Naive thymus-derived CD8-positive, alpha-beta T cell (primary cell): ENCODE measurements at regions of chr17 and their contacts with region 1.

Region 1: DNA sequence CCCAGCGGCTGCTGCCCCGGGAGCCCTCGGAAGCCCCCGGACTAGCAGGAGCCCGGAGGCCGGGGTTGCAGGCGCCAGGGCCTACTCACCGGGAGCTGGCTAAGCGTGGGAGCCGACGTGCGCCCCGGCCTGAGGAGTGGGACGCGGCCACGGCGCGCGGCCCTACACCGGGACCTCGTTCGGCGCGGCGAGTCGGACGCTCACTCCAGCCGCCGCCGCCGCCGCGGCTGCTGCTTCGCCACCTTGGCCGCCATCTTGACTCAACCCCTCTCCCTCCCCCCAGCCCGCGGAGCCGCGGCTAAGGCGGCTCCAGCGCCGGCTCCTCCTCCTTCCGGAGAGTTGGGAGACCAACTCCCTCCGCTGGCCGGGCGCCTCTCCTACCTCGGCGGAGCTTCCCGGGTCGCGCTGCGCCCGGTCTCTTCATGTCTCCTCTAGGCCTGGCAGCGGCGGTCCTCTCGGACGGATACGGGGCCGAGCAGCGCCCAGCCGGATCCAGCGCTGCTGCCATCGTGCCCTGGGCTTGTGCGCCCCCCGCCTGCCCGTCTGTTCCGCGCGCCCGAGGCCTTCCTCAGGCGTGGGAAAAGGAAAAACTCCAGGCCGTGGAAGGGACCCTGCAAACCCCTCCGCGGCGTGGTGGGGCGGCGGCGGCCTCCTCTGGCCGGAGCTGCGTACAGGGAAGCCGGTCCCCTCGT is at the start of gene NCOR1:
- DNase-seq: peak; percentile 78 to 91 (median 82)
- ATAC-seq: peak; percentile 86
- H3K4me3 Mint-ChIP-seq: peak within 1 kb of the TSS; percentile 89 to 99 (median 96)
- H3K27ac Mint-ChIP-seq: peak within 1 kb of the TSS; percentile 81 to 98 (median 94)
- H3K4me1 Mint-ChIP-seq: peaks cover 15 to 59% (median 53%) of the 10 kb centered on the region in 4 donors
- H3K27me3 Mint-ChIP-seq: no peaks in the 10 kb centered on the region
- polyA plus RNA-seq, gene NCOR1: 41.8 to 132 (median 73.7) TPM

Region 2: GRCh38 chr17:16150251-16150856 is 65.1 kb before region 1 on chr17:
- POLR2A ChIA-PET with region 1: no interaction called
- DNase-seq: no peak
- ATAC-seq: no peak
- H3K4me3 Mint-ChIP-seq: no peak overlapping the region
- H3K27ac Mint-ChIP-seq: no peak overlapping the region
- H3K4me1 Mint-ChIP-seq: peaks cover 0 to 3% (median 0%) of the 10 kb centered on the region in 4 donors
- H3K27me3 Mint-ChIP-seq: no peaks in the 10 kb centered on the region

Region 3: DNA sequence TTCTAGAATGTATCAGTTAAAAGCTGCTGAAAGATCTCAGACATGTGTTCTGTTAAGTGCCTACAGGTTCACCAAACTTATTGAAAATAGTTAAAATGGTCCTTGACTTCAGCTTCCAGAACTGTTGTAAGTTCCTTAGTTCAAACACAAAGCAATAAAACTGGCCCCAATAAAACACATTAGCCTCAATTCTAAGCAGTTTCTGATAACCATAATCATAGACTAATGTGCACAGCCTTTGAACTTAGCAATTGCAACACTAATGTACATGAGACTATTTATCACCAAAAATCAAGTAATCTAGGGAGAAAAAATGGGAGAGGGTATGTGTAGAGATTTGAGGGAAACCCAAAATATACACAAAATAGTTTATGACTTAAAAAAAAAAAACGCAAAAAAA is 17.0 kb after region 1 on chr17:
- POLR2A ChIA-PET with region 1: interaction called, 11 read pairs
- DNase-seq: no peak
- ATAC-seq: no peak
- H3K4me3 Mint-ChIP-seq: no peak overlapping the region
- H3K27ac Mint-ChIP-seq: peak overlapping the region in 3 of 10 donors; percentile 3 to 46 (median 45)
- H3K4me1 Mint-ChIP-seq: peaks cover 10 to 23% (median 16%) of the 10 kb centered on the region in 4 donors
- H3K27me3 Mint-ChIP-seq: no peaks in the 10 kb centered on the region

Region 4: GRCh38 chr17:16285957-16286640 is 70.7 kb after region 1 on chr17:
- POLR2A ChIA-PET with region 1: interaction called, 16 read pairs
- DNase-seq: peak; percentile 21 to 83 (median 66)
- ATAC-seq: peak; percentile 92 to 95
- H3K4me3 Mint-ChIP-seq: peak overlapping the region; percentile 67 to 85 (median 80)
- H3K27ac Mint-ChIP-seq: peak overlapping the region; percentile 95 to 99 (median 98)
- H3K4me1 Mint-ChIP-seq: peaks cover 30 to 66% (median 60%) of the 10 kb centered on the region in 4 donors
- H3K27me3 Mint-ChIP-seq: no peaks in the 10 kb centered on the region

Region 5: DNA sequence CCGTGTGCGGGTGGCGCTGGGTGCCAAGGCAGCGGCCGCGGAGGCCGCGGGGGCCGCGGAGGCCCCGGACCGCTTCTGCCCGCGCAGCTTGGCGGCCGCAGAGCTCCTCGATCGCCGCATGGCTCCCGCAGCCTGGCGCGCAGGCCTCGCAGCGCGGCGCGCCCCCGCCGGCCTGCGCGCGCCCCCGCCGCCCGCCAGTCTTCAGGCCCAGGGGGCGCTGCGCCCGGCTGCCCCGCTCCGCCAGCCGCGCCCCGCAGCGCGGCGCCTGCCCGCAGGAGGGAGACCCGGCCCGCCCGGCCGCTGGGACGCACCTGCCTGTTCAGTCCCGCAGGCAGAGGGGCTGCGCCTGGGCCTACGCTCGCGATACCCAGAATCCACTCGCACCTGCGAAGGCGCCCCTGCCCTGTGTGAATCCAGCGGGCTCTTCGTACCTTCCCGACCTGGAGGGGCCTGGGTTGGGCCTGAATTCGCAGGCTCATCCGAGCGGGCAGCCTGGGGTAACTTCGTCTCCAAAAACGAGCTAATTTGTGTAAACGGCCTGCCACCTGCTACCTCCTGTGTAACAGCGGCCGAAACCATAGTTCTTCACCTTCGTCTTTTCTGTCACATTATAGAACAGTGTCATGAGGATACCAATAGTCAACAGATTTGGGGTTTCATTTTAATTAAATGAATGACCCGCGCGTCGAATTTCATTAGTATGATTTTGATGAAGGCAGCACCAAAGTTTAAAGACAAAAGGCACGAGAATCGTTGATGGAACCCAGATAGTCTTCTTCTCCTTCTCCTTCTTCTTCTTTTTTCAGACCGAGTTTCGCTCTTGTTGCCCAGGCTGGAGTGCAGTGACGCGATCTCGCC is 138.1 kb after region 1 on chr17 and contains the start of gene CENPV:
- POLR2A ChIA-PET with region 1: interaction called, 27 read pairs
- DNase-seq: peak; percentile 63 to 85 (median 76)
- ATAC-seq: peak; percentile 86 to 88
- H3K4me3 Mint-ChIP-seq: peak within 1 kb of the TSS; percentile 86 to 97 (median 93)
- H3K27ac Mint-ChIP-seq: peak within 1 kb of the TSS; percentile 74 to 94 (median 90)
- H3K4me1 Mint-ChIP-seq: peaks cover 9 to 27% (median 20%) of the 10 kb centered on the region in 4 donors
- H3K27me3 Mint-ChIP-seq: no peaks in the 10 kb centered on the region
- polyA plus RNA-seq, gene CENPV: 24.7 to 30.9 (median 28.3) TPM

Region 6: GRCh38 chr17:16438557-16439302 is 223.3 kb after region 1 on chr17:
- POLR2A ChIA-PET with region 1: interaction called, 10 read pairs
- DNase-seq: peak; percentile 88 to 98 (median 96)
- ATAC-seq: peak; percentile 89 to 90
- H3K4me3 Mint-ChIP-seq: peak overlapping the region; percentile 98 to 100 (median 99)
- H3K27ac Mint-ChIP-seq: peak overlapping the region; percentile 95 to 99 (median 98)
- H3K4me1 Mint-ChIP-seq: peaks cover 39 to 60% (median 52%) of the 10 kb centered on the region in 4 donors
- H3K27me3 Mint-ChIP-seq: no peaks in the 10 kb centered on the region

Region 7: GRCh38 chr17:16449121-16449570 is 233.7 kb after region 1 on chr17:
- POLR2A ChIA-PET with region 1: no interaction called
- DNase-seq: no peak
- ATAC-seq: no peak
- H3K4me3 Mint-ChIP-seq: no peak overlapping the region
- H3K27ac Mint-ChIP-seq: no peak overlapping the region
- H3K4me1 Mint-ChIP-seq: peaks cover 6 to 38% (median 11%) of the 10 kb centered on the region in 4 donors
- H3K27me3 Mint-ChIP-seq: no peaks in the 10 kb centered on the region